ENCODE measurements at regions of chr16 and their contacts with region 1.

Region 1: GRCh38 chr16:53600126-53600525 is 97.1 kb upstream of the AKTIP start:
- DNase-seq: peak; percentile 20
- ATAC-seq: peak; percentile 46
- H3K4me3 ChIP-seq: no peak overlapping the region
- H3K27ac ChIP-seq: no peak overlapping the region
- H3K4me1 ChIP-seq: peaks cover 6% of the 10 kb centered on the region
- H3K27me3 ChIP-seq: no peaks in the 10 kb centered on the region
- CTCF ChIP-seq: no peak
- POLR2A ChIP-seq: no peak
- RAD21 ChIP-seq: no peak

Region 2: DNA sequence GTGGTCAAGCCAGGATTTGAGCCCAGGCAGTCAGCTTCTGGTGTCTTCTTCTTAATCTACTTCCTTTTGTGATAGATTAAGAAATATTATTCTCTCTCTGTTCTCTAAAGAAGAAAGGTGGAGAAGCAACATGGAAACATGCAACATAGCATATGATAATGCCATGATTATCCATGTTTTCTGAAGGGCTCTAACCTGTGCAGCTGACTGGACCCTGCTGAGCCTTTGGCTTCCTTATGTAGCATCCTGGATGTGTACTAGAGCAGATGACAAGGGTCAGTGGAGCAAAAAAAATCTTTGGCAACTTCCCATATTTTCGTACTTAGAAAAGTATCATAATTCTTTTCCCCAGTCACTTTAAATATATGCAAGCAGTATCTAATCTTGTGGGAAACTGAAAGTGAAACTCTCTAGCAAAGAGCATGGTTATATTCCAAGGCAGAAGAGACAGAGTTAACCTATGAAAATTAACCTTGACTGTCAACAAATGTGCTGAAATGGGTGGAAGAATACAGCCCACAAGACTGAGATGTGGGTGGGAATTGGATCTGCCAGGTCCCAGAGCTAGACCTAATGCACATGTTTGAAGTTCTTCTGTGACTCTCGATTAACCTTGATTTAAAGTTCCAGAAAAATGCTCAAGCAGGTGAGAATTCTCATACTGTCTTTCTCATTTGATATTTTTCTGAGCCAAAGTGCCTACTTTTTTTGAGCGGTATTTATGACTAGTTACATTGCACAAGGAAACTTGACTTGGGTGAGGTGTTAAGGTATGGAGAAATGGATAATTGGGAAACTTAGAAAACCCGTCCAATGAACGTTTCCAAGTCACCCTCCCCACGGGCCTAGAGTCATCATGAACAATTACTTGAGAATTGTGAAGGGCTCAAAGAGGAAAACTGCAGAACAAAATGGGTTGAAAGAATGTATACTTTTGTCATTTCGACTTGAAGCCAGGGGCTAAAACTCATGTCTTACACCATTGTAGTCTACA is 352.4 kb after region 1 on chr16:
- CTCF ChIA-PET with region 1: no interaction called
- POLR2A ChIA-PET with region 1: no interaction called
- dilution Hi-C with region 1: no loop called
- in situ Hi-C with region 1: no loop called
- intact Hi-C with region 1: no loop called
- DNase-seq: peak; percentile 52
- ATAC-seq: peak; percentile 76
- H3K4me3 ChIP-seq: no peak overlapping the region
- H3K27ac ChIP-seq: no peak overlapping the region
- H3K4me1 ChIP-seq: peaks cover 3% of the 10 kb centered on the region
- H3K27me3 ChIP-seq: no peaks in the 10 kb centered on the region
- CTCF ChIP-seq: no peak
- POLR2A ChIP-seq: no peak
- RAD21 ChIP-seq: no peak

Region 3: GRCh38 chr16:54936979-54937670 is 1337.0 kb after region 1 on chr16:
- CTCF ChIA-PET with region 1: no interaction called
- POLR2A ChIA-PET with region 1: interaction called, 10 read pairs
- dilution Hi-C with region 1: no loop called
- in situ Hi-C with region 1: no loop called
- intact Hi-C with region 1: no loop called
- DNase-seq: no peak
- ATAC-seq: no peak
- H3K4me3 ChIP-seq: no peak overlapping the region
- H3K27ac ChIP-seq: no peak overlapping the region
- H3K4me1 ChIP-seq: no peaks in the 10 kb centered on the region
- H3K27me3 ChIP-seq: peaks cover 89% of the 10 kb centered on the region
- CTCF ChIP-seq: 0 out of 2 replicates have a peak, but pooled peaks have one; percentile 20
- POLR2A ChIP-seq: no peak
- RAD21 ChIP-seq: peak; percentile 10; the same call in 1 of the 2 replicates